ENCODE measurements at regions of chr14 and their contacts with region 1.

Region 1: DNA sequence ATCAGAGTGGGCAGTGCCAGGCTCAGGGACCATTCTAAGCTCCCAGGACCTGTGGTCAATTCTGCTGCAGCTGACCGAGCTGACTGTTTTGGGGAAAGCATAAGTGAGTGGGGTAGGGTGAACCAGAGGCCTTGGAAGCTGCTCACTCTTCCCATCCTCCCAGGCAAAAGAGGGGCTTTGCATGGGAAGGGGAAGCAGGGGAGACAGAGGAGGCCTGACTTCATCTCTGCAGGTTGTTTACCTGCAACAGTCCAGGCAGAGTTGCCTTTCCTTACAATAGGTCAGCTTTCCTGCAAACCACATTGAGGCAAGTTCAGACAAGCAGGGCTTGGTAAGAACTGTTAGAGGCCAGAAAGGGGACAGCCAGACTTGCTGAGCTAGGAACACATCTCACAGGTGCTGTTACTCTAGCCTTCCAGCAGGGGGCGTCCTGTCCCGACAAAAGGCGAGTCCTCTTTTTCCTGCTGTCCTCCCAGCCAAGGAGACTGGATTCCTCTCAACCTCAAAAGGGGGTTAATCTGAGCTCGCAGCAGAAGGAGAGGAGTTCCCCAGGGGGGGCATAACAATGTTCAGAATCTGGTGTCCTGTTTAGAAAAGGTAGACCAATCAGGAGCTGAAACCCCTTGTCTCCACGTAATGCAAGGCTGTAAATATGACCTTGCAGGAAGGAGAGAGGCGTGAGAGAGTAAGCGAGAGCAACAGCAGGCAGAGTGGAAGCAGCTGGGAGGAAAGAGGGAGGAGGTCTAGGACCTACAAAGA is 4.3 kb upstream of the DHRS2 start:
- DNase-seq: peak; percentile 73 to 75
- ATAC-seq: peak; percentile 78 to 90
- H3K4me3 ChIP-seq: no peak overlapping the region
- H3K27ac ChIP-seq: 0 out of 6 replicates have a peak overlapping the region, but pooled peaks of 1 of the 2 experiments have one; percentile 38
- H3K4me1 ChIP-seq: no peaks in the 10 kb centered on the region
- CTCF ChIP-seq: peak; percentile 78
- EP300 ChIP-seq: no peak
- POLR2A ChIP-seq: no peak
- RAD21 ChIP-seq: peak; percentile 71 to 81

Region 2: GRCh38 chr14:23605931-23606585 is 25.8 kb before region 1 on chr14:
- CTCF ChIA-PET with region 1: interaction called, 25 read pairs
- POLR2A ChIA-PET with region 1: no interaction called
- DNase-seq: no peak
- ATAC-seq: no peak
- H3K4me3 ChIP-seq: no peak overlapping the region
- H3K27ac ChIP-seq: no peak overlapping the region
- H3K4me1 ChIP-seq: no peaks in the 10 kb centered on the region
- CTCF ChIP-seq: no peak
- EP300 ChIP-seq: no peak
- POLR2A ChIP-seq: no peak
- RAD21 ChIP-seq: no peak

Region 3: DNA sequence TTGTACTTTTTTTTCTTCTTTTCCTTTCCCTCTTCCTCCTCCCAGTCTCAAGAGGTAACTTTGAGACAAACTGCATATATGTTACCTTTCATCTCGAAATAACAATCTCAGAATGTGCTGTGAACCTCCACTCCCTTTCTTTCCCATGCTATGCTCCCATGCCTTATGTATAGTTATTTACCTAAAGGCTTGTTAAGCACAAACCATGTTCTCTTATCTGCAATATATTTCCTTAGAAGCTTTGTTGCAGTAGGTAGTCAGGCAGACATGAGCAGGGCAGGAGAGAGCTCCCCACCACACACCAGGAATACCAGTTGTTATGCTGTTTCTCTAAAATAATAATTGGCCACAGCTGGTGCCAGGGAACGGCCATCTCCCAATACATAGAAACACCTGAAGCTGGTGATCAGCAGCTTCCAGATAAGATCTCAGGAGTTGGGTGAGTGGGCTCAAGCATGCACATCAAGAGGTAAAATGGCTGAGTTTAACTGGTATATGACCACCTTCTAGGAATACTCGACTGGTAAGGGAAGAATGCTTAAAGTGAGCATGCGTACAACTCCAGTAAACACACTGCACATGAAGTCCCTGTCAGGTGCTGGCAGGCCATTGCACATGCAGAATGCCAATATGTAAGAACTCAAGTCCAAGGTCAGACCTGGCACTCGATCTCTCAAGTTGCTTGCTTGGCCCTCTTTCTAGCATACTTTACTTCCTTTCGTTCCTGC is 10.5 kb before region 1 on chr14:
- CTCF ChIA-PET with region 1: interaction called, 37 read pairs
- POLR2A ChIA-PET with region 1: no interaction called
- DNase-seq: no peak
- ATAC-seq: no peak
- H3K4me3 ChIP-seq: no peak overlapping the region
- H3K27ac ChIP-seq: no peak overlapping the region
- H3K4me1 ChIP-seq: no peaks in the 10 kb centered on the region
- CTCF ChIP-seq: no peak
- EP300 ChIP-seq: no peak
- POLR2A ChIP-seq: no peak
- RAD21 ChIP-seq: no peak

Region 4: DNA sequence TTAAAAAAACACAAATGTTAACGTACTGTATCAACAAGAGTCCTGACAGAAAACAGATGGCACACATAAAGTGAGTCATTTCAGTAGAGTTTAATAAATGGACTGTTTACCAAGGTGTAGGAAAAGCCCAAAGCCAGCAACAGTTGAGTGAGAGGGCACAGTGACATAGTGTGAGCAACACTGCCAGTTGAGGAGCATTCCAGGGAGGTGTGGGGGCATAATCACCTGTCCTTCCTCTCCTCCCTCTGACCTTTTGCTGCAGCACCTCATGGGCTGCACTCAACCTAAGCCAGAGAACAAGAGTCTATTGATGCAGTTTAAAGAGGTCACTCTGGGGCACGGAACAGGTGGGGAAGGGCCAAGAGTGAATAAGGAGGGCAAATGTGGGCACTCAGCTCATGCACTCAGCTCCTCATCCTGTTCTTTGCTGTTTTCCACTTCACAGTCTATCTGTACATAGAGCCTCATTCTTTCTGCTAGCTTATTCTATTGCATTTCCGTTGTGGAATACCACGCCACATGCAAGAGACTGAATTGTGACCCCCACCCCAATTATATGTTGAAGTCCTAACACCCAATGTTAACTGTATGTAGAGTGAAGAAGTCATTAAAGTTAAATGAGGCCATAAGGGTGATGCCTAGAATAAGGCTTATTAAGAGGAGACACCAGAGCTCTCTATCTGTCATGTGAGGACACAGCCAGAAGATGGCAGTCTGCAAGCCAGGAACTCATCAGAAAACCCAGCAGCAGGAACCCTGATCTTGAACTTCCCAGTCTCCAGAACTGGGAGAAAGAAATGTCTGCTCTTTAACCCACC is 33.7 kb after region 1 on chr14:
- CTCF ChIA-PET with region 1: interaction called, 14 read pairs
- POLR2A ChIA-PET with region 1: no interaction called
- DNase-seq: peak; percentile 27 to 63
- ATAC-seq: peak; percentile 82 to 91
- H3K4me3 ChIP-seq: no peak overlapping the region
- H3K27ac ChIP-seq: no peak overlapping the region
- H3K4me1 ChIP-seq: no peaks in the 10 kb centered on the region
- CTCF ChIP-seq: peak; percentile 50
- EP300 ChIP-seq: no peak
- POLR2A ChIP-seq: no peak
- RAD21 ChIP-seq: peak; percentile 44 to 57; a peak in 4 of 5 replicates

Region 5: DNA sequence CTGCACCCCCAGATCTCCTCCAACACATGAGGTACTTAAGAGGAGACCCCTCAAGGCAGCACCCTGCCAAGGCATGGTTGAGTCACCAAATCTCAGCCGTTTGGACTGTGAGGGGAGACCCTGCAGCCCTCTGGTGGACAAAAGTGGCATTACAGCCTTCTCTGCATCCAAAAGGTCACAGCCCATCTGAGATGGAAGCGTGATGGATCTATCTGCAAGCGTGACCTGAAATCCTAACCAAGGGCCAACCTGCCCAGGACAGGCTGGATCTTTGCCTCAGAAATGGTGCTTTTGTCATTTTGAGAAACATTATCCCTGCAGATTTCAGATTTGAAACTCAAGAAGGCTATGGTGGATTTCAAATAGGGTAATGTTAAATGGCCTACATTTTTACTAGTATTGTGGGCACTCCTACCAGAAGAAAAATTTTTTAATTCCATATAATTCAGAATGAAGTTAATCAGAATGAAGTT is 298.0 kb after region 1 on chr14:
- CTCF ChIA-PET with region 1: interaction called, 22 read pairs
- POLR2A ChIA-PET with region 1: no interaction called
- DNase-seq: peak; percentile 68 to 73
- ATAC-seq: peak; percentile 87 to 99
- H3K4me3 ChIP-seq: no peak overlapping the region
- H3K27ac ChIP-seq: no peak overlapping the region
- H3K4me1 ChIP-seq: no peaks in the 10 kb centered on the region
- CTCF ChIP-seq: peak; percentile 66
- EP300 ChIP-seq: no peak
- POLR2A ChIP-seq: no peak
- RAD21 ChIP-seq: peak; percentile 63 to 72

Region 6: GRCh38 chr14:24011051-24011450 is 379.2 kb after region 1 on chr14:
- CTCF ChIA-PET with region 1: no interaction called
- POLR2A ChIA-PET with region 1: no interaction called
- DNase-seq: no peak
- ATAC-seq: no peak
- H3K4me3 ChIP-seq: no peak overlapping the region
- H3K27ac ChIP-seq: no peak overlapping the region
- H3K4me1 ChIP-seq: peaks cover 8% of the 10 kb centered on the region; the same call in 2 of the 3 replicates
- CTCF ChIP-seq: no peak
- EP300 ChIP-seq: no peak
- POLR2A ChIP-seq: no peak
- RAD21 ChIP-seq: no peak